ENCODE measurements at regions of chr10 and their contacts with region 1.

Region 1: DNA sequence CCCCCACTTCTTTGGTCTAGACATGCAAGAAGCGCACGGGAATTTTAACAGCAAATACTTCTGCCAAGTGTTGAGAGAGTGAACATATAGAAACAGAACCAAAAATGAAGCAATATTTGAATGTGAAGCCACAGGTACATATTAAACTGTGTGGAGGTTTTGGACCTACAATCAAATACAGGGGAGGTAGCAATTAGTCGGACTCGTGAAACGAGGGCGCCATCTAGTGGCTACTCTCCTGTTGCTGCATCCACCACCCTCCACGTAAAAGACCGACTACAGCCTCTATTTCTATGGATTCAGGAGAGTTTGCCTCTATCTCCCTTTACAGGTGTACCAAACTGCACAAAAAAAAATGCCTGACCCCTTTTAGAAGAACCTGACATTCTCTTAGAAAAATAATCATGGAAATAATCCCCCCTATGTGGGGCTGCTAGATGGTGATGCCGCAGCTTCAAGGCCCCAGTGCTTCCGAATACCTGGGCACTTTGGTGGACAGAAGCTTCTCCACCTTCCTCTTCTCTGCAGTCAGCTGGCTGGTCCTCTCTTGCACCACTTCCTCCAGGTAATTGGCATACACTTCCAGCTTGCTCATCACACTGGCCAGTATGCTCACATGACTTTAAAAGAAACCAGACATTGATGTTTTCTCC is 31.7 kb downstream of the TECTB start:
- DNase-seq: peak; percentile 70
- ATAC-seq: peak; percentile 94
- H3K4me3 ChIP-seq: no peak overlapping the region
- H3K27ac ChIP-seq: no peak overlapping the region
- H3K4me1 ChIP-seq: no peaks in the 10 kb centered on the region
- H3K27me3 ChIP-seq: peaks cover 2% of the 10 kb centered on the region
- CTCF ChIP-seq: peak; percentile 90
- POLR2A ChIP-seq: no peak
- RAD21 ChIP-seq: peak; percentile 94

Region 2: GRCh38 chr10:110556969-110557601 is 1757.9 kb before region 1 on chr10:
- CTCF ChIA-PET with region 1: no interaction called
- POLR2A ChIA-PET with region 1: no interaction called
- dilution Hi-C with region 1: no loop called
- in situ Hi-C with region 1: no loop called
- intact Hi-C with region 1: loop called (anchors 5 kb)
- DNase-seq: peak; percentile 62
- ATAC-seq: peak; percentile 75; the same call in 1 of the 2 replicates
- H3K4me3 ChIP-seq: no peak overlapping the region
- H3K27ac ChIP-seq: no peak overlapping the region
- H3K4me1 ChIP-seq: peaks cover 3% of the 10 kb centered on the region; the same call in 1 of the 2 replicates
- H3K27me3 ChIP-seq: peaks cover 4% of the 10 kb centered on the region; the same call in 1 of the 2 replicates
- CTCF ChIP-seq: peak; percentile 69
- POLR2A ChIP-seq: no peak
- RAD21 ChIP-seq: peak; percentile 54

Region 3: DNA sequence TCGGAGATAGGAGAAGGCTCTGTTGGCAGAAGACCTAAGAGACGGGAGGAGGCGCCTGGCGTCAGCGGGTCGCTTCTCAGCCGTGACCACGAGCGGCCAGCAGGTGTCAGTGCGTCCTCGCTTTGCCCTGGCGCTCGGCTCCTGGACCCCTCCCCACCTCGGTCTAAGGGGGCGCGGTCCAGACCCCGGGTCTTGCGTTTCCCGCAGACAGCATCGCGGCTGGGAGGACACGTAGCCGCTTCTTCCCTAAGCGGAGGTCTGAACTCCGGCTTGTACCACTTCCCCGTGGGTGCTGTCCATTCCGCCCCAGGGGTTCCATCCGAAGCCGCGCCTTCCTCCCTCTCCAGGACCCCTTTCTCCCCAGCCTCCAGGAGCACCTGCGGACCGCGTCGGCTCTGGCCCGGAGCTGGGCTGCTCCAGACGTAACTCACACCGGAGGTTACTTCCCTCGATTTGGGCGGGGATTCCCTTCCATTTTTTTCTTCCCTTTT is 1238.7 kb before region 1 on chr10:
- CTCF ChIA-PET with region 1: no interaction called
- POLR2A ChIA-PET with region 1: no interaction called
- dilution Hi-C with region 1: no loop called
- in situ Hi-C with region 1: loop called (anchors 25 kb)
- intact Hi-C with region 1: no loop called
- DNase-seq: peak; percentile 27
- ATAC-seq: peak; percentile 87
- H3K4me3 ChIP-seq: peak overlapping the region; percentile 28
- H3K27ac ChIP-seq: no peak overlapping the region
- H3K4me1 ChIP-seq: no peaks in the 10 kb centered on the region; the same call in 1 of the 2 replicates
- H3K27me3 ChIP-seq: peaks cover 68% of the 10 kb centered on the region
- CTCF ChIP-seq: peak; percentile 61
- POLR2A ChIP-seq: no peak
- RAD21 ChIP-seq: peak; percentile 55

Region 4: DNA sequence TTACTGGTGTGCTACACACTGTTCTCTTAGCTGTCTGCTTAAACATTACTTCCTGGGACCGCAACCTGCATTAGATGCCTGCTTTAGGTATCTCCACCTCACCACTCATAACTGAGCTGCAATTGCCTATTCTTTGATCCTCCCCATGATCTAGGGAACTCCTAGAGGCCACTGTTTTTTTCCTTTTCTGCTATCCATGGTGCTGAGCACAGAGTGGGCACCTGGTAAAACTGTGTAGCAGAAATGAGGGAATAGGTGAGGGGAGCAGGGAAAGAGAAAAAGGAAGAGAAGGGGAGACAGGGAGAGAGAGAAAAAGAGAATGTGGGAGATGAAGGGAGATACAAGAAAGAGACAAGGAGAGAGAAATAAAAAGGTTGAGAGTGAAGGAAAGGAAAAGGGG is 803.2 kb before region 1 on chr10:
- CTCF ChIA-PET with region 1: no interaction called
- POLR2A ChIA-PET with region 1: no interaction called
- dilution Hi-C with region 1: no loop called
- in situ Hi-C with region 1: no loop called
- intact Hi-C with region 1: no loop called
- DNase-seq: no peak
- ATAC-seq: no peak
- H3K4me3 ChIP-seq: no peak overlapping the region
- H3K27ac ChIP-seq: no peak overlapping the region
- H3K4me1 ChIP-seq: no peaks in the 10 kb centered on the region
- H3K27me3 ChIP-seq: no peaks in the 10 kb centered on the region
- CTCF ChIP-seq: no peak
- POLR2A ChIP-seq: no peak
- RAD21 ChIP-seq: no peak

Region 5: DNA sequence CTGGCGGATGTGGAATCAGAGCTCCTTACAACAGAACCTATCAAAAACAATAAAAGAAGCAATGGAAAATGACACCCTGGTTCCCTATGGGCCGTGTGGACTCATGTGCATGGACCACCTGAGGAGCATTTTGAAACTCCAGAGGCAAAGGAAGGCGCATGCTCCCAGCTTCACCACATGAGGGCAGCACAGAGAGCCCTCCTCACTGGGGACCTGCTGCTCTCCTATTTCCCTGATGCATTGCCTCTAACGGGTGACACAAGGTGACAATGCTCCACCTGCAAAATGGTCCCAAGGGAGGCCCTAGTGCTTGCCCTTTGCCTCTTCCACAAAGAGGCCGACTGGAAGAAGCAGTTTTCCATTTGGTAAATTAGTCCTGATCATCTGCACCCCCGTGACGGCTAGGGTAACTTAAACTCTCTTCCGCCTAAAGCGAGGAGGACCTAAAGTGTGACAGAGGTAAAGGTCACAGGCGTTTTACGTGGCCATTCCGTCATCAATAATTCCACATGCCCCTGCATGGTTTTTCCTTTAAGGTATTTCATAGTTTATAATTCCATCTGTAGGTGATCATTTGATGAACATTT is 199.1 kb before region 1 on chr10:
- CTCF ChIA-PET with region 1: no interaction called
- POLR2A ChIA-PET with region 1: no interaction called
- dilution Hi-C with region 1: no loop called
- in situ Hi-C with region 1: no loop called
- intact Hi-C with region 1: loop called (anchors 1 kb)
- DNase-seq: peak; percentile 18
- ATAC-seq: peak; percentile 92
- H3K4me3 ChIP-seq: no peak overlapping the region
- H3K27ac ChIP-seq: no peak overlapping the region
- H3K4me1 ChIP-seq: no peaks in the 10 kb centered on the region
- H3K27me3 ChIP-seq: no peaks in the 10 kb centered on the region
- CTCF ChIP-seq: peak; percentile 60
- POLR2A ChIP-seq: no peak
- RAD21 ChIP-seq: peak; percentile 46

Region 6: DNA sequence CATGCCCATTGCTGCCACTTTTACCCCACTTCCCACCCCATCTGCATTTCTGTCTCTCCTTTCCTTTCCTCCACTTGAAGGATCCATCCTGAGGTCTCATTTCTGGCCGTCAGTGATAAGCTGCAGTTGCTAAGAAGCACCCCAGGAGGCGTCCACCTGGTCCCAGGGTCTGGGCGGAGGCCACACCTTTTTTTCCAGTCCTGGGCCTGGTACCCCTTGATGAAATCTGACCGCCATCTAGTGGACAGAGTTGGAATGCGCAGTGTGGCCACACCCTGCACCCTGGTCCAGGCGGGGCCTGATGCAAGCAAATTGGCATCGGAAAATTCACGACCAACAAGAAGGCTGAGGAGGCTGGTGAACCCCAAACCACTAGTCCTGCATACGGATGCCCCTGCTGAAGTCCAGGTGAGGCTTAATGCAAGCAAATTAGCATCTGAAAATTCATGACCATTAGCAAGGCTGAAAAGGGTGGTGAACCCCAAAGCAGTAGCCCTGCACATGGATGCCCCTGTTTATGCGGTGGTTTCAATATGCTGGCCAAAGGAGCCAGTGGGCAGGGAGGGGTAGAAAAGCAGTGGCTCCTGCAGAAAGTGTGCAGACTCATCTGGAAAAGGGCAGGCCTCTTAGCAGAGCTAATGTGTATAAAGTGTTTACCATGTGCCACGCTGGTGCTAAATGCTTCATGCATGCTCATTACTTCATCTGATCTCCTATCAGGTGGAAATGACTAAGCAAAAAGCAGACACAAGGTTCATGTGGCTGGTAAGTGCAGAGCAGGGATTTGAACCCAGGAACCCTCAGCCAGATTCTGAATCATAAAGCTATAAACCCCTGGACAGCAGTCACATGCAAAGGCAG is 174.6 kb before region 1 on chr10:
- CTCF ChIA-PET with region 1: no interaction called
- POLR2A ChIA-PET with region 1: no interaction called
- dilution Hi-C with region 1: no loop called
- in situ Hi-C with region 1: loop called (anchors 10 kb)
- intact Hi-C with region 1: loop called (anchors 1 kb)
- DNase-seq: peak; percentile 59
- ATAC-seq: peak; percentile 96
- H3K4me3 ChIP-seq: no peak overlapping the region
- H3K27ac ChIP-seq: no peak overlapping the region
- H3K4me1 ChIP-seq: no peaks in the 10 kb centered on the region
- H3K27me3 ChIP-seq: no peaks in the 10 kb centered on the region; the same call in 1 of the 2 replicates
- CTCF ChIP-seq: peak; percentile 83
- POLR2A ChIP-seq: no peak
- RAD21 ChIP-seq: peak; percentile 69

Region 7: DNA sequence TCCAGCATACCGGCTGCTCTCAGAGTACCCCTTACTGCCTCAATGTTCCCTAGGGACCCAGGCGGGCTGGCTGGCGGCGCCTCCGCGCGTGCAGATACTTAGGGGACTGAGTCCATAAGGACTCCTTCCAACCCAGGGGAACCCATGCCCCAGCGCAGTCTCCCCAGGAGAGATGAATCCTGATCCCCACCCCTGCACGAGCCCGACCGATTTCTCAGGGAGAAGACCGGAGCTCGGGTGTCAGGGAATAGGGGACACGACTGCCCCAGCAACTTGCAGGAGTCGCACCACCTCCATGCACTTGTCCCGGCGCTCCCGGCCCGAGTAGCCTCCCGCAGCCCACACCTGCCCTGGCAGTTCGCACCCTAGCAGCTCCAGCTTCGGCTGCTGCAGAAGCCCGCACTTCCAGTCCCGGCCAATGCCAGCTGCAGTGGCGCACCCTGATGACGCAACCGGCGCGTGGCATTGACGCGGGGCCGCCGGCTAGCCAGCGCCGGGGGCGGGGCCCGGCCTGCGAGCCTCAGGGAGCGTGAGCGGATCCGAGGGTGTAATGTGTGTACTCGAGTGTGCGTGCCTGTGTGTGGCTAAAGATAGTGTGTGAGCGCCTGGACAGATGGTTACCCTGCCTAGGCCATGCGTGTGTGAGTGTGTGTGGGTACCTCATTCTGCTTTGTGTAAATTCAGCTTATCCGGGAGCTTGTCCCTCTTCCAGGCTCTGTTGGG is 131.5 kb before region 1 on chr10 and contains the start of gene GPAM:
- CTCF ChIA-PET with region 1: interaction called, 3 read pairs
- POLR2A ChIA-PET with region 1: no interaction called
- dilution Hi-C with region 1: no loop called
- in situ Hi-C with region 1: no loop called
- intact Hi-C with region 1: loop called (anchors 2 kb)
- DNase-seq: peak; percentile 85
- ATAC-seq: peak; percentile 98
- H3K4me3 ChIP-seq: peak within 1 kb of the TSS; percentile 60
- H3K27ac ChIP-seq: peak within 1 kb of the TSS; percentile 82
- H3K4me1 ChIP-seq: 0 out of 2 replicates have a peak, but pooled peaks cover 3% of the 10 kb centered on the region
- H3K27me3 ChIP-seq: no peaks in the 10 kb centered on the region
- CTCF ChIP-seq: no peak
- POLR2A ChIP-seq: peak; percentile 68; the same call in 1 of the 2 replicates
- RAD21 ChIP-seq: 0 out of 2 replicates have a peak, but pooled peaks have one; percentile 12
- total RNA-seq, gene GPAM: 11.5 and 13.1 TPM in 2 replicates

Region 8: GRCh38 chr10:112434988-112435619 is 120.2 kb after region 1 on chr10:
- CTCF ChIA-PET with region 1: no interaction called
- POLR2A ChIA-PET with region 1: no interaction called
- dilution Hi-C with region 1: no loop called
- in situ Hi-C with region 1: no loop called
- intact Hi-C with region 1: loop called (anchors 1 kb)
- DNase-seq: peak; percentile 60
- ATAC-seq: peak; percentile 69
- H3K4me3 ChIP-seq: no peak overlapping the region
- H3K27ac ChIP-seq: no peak overlapping the region
- H3K4me1 ChIP-seq: no peaks in the 10 kb centered on the region
- H3K27me3 ChIP-seq: no peaks in the 10 kb centered on the region
- CTCF ChIP-seq: peak; percentile 52
- POLR2A ChIP-seq: no peak
- RAD21 ChIP-seq: peak; percentile 68

Region 9: GRCh38 chr10:112461029-112461887 is 146.3 kb after region 1 on chr10:
- CTCF ChIA-PET with region 1: no interaction called
- POLR2A ChIA-PET with region 1: no interaction called
- dilution Hi-C with region 1: no loop called
- in situ Hi-C with region 1: no loop called
- intact Hi-C with region 1: no loop called
- DNase-seq: peak; percentile 87
- ATAC-seq: peak; percentile 51; the same call in 1 of the 2 replicates
- H3K4me3 ChIP-seq: no peak overlapping the region
- H3K27ac ChIP-seq: peak overlapping the region; percentile 44; the same call in 1 of the 2 replicates
- H3K4me1 ChIP-seq: 0 out of 2 replicates have a peak, but pooled peaks cover 2% of the 10 kb centered on the region
- H3K27me3 ChIP-seq: no peaks in the 10 kb centered on the region
- CTCF ChIP-seq: no peak
- POLR2A ChIP-seq: no peak
- RAD21 ChIP-seq: no peak

Measured in IMR-90 (cell line).